Posterior cingulate gyrus (tissue), 11 donors: ENCODE measurements at regions of chr13 and their contacts with region 1.

Region 1: GRCh38 chr13:50685491-50685890 is 158.0 kb downstream of the DLEU7 start:
- DNase-seq: peak in 9 of 10 donors; percentile 42 to 94 (median 83)

Region 2: DNA sequence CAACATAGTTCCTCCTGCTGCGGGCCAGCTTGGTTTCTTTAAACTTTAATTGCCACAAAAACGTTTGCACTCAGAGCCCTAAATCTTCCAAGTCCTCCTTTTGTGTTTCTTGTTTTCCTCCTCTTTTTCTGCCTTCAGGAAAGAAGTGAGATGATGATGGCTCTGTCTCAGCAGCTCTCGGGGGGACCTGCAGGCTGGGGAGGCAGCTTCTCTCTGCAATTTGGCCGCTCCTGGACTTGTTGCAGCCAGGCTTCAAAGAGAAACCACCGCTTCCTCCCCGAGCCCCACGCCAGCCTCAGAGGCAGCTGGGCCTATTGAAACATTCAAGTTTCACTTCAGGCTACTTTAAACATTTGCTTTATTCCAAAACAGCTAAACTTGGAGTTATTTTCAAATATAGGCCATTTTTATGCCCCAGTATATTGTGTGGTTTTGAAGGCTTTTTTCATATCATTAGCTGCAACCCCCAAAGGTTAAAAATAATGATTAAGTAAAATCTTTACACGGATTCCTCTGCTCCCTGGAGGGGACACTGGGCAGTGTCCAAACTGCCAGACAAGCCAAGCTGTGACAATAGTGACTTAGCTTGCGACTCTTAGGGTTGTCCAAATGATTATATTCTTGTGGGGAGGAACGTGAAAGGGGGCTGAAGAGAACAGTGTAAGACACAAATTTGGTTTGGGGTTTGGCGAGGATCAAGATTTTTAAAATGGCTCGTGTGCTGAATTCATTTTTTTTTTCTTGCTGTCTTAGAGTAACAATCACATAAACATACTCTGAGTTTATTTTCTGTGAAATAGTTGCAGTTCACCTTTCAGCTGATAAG is 172.8 kb before region 1 on chr13:
- intact Hi-C with region 1: no loop called
- DNase-seq: peak in 8 of 10 donors; percentile 28 to 90 (median 50)

Region 3: GRCh38 chr13:50576156-50576555 is 109.3 kb before region 1 on chr13:
- intact Hi-C with region 1: no loop called
- DNase-seq: no peak

Region 4: DNA sequence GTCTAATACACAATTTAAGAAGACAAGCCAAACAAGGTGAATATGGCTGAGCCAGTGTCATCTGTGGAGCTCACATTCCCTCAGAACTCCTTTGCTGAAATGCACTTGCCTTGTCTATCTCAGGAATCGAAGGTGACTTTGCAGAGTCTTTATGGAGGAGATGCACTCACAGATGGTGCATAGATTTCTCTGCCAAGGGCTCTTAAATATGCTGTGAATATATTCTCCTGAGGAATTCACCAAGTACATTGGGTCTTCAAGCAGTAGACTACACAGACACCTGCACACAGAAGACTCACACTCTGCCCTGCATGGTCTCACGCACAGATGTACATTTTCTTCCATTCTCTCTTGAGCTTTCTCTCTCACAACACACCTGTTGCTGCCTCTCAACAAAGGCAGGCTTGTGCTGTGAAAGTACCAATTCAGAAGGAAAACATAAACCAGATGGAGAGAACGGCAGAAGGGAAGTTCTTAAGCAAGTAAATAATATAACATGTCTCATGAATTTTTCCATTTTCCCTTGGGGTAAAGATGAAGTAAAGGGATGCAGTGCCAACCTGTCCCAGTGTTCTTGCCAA is 16.7 kb before region 1 on chr13:
- intact Hi-C with region 1: no loop called
- DNase-seq: no peak

Region 5: DNA sequence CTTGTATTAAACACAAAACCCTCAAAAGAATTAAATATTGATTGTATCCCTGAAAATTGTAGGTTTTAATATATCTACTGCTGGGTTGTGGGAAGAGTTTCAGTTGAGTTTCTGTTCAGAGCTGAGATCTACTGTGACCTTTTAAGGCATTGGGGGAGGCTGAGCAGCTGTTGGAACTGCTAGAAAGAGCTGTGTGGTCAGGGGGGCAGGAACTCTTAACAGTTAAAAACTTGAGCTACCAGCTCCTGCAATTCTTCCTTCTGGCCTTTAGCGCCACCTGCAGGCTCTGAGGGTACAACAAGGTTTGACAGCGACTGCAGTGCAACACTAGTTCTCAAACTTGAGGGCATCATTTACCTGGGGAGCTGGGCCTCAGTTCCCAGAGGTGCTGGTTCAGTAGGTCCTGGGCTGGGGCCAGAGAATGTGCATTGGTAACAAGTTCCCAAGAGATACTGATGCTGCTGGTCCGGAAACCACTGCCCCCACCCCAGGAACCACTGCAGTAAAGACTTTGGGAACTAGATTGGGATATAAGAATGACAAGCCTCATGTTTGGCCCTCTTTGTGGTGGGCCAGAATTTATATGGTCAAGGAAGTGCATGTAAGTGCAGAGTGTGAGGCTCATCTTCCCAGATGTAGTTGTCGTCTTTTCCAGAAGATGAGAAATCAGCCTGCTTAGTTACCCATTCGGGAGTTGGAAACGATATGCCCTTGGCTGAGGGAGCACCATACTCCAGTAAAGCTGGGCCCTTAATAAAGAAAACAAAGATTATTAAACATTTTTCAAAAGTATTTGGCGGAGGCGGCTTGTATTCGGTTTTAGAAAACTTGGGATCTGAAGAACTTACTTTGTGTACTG is 226.7 kb after region 1 on chr13:
- intact Hi-C with region 1: loop called (anchors 5 kb)
- DNase-seq: peak; percentile 72 to 97 (median 90)